ENCODE measurements at regions of chr4 and their contacts with region 1.

Region 1: GRCh38 chr4:139656614-139657486 is 8.8 kb upstream of the MGST2 start:
- DNase-seq: peak; percentile 56 to 79
- ATAC-seq: peak; percentile 92
- H3K4me3 ChIP-seq: no peak overlapping the region
- H3K27ac ChIP-seq: peak overlapping the region; percentile 60 to 63
- H3K4me1 ChIP-seq: peaks cover 32% of the 10 kb centered on the region
- CTCF ChIP-seq: peak; percentile 54; the same call in 2 of the 3 replicates
- EP300 ChIP-seq: no peak
- POLR2A ChIP-seq: no peak
- RAD21 ChIP-seq: peak; percentile 31 to 58; a peak in 3 of 5 replicates

Region 2: DNA sequence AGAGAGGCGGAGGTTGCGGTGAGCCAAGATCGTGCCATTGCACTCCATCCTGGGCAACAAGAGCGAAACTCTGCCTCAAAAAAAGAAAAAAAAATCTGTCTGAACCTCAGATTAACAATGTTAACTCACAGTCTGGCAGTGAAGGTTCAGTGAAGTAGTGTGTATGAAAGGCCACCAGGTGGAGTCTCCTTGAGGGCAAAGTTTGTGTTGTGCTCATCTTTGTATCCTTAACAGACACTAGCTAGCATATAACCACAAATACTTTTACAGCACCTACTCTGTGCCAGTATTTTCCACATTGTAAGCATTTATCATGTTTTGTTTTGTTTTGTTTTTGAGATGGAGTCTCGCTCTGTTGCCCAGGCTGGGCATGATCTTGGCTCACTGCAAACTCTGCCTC is 37.2 kb before region 1 on chr4:
- CTCF ChIA-PET with region 1: interaction called, 23 read pairs
- POLR2A ChIA-PET with region 1: no interaction called
- DNase-seq: peak in 1 of 2 experiments; percentile 55
- ATAC-seq: peak; percentile 62 to 92; a peak in 4 of 6 replicates
- H3K4me3 ChIP-seq: no peak overlapping the region
- H3K27ac ChIP-seq: no peak overlapping the region
- H3K4me1 ChIP-seq: no peaks in the 10 kb centered on the region
- CTCF ChIP-seq: peak; percentile 39
- EP300 ChIP-seq: no peak
- POLR2A ChIP-seq: no peak
- RAD21 ChIP-seq: peak; percentile 32 to 50

Region 3: GRCh38 chr4:139641218-139641617 is 15.6 kb before region 1 on chr4:
- CTCF ChIA-PET with region 1: interaction called, 39 read pairs
- POLR2A ChIA-PET with region 1: no interaction called
- DNase-seq: peak; percentile 47 to 83
- ATAC-seq: peak; percentile 91 to 96
- H3K4me3 ChIP-seq: no peak overlapping the region
- H3K27ac ChIP-seq: peak overlapping the region; percentile 82 to 87
- H3K4me1 ChIP-seq: peaks cover 62% of the 10 kb centered on the region
- CTCF ChIP-seq: no peak
- EP300 ChIP-seq: peak; percentile 62 to 63; a peak in 2 of 5 replicates
- POLR2A ChIP-seq: no peak
- RAD21 ChIP-seq: no peak

Region 4: DNA sequence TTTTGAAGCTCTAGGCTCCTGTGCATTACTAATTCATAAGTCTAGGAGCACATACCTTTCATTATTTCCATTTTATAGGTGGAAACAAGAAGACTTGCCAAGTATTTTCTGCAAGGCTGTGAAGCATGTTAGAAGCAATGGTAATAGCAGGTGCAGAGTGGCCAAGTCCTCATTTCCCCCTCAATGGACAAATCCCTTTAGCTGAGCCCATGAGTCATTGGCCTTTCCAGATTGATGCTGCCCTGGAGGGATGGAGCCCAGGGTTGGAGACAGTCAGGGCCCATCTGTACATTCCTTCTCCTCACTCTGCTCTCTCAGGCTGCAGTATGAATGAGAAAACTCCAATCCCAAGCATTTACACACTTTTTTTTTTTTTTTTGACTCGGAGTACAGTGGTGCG is 15.4 kb after region 1 on chr4:
- CTCF ChIA-PET with region 1: interaction called, 26 read pairs
- POLR2A ChIA-PET with region 1: no interaction called
- DNase-seq: no peak
- ATAC-seq: no peak
- H3K4me3 ChIP-seq: no peak overlapping the region
- H3K27ac ChIP-seq: no peak overlapping the region
- H3K4me1 ChIP-seq: peaks cover under 1% of the 10 kb centered on the region; the same call in 2 of the 3 replicates
- CTCF ChIP-seq: no peak
- EP300 ChIP-seq: no peak
- POLR2A ChIP-seq: no peak
- RAD21 ChIP-seq: no peak

Region 5: DNA sequence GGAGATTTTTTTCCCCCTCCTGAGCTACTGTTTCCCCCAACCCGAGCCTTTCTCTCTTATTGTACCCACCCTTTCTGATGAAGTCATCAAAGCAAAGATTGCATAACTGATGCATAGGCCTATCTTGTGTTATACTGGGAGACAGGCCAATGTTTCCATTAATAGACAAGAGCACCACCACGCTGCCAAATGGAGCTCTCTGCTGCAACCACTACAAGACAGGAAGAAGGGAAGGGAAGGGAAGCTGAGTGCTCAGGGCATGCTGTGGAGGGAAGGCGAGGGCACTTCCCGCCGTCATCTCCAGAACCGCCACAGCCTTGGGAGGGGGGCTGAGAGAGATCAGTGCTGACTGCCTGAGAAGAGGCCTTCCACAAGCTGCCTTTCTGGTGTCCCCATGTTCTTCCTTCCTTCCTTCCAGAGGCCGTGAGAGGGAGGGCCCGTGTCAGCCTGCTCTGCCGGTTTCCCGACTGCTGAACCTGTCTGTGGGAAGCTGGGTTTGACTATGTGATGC is 83.7 kb after region 1 on chr4:
- CTCF ChIA-PET with region 1: interaction called, 24 read pairs
- POLR2A ChIA-PET with region 1: no interaction called
- DNase-seq: peak; percentile 6 to 68
- ATAC-seq: peak; percentile 90 to 91
- H3K4me3 ChIP-seq: no peak overlapping the region
- H3K27ac ChIP-seq: peak overlapping the region; percentile 17 to 66; a peak in 4 of 6 replicates
- H3K4me1 ChIP-seq: peaks cover 35% of the 10 kb centered on the region
- CTCF ChIP-seq: 0 out of 3 replicates have a peak, but pooled peaks have one; percentile 18
- EP300 ChIP-seq: no peak
- POLR2A ChIP-seq: no peak
- RAD21 ChIP-seq: peak in 1 of 2 experiments; percentile 24; a peak in 1 of 5 replicates

Region 6: GRCh38 chr4:140252742-140253555 is 596.1 kb after region 1 on chr4:
- CTCF ChIA-PET with region 1: interaction called, 12 read pairs
- POLR2A ChIA-PET with region 1: no interaction called
- DNase-seq: peak; percentile 63 to 77
- ATAC-seq: peak; percentile 78 to 86
- H3K4me3 ChIP-seq: peak overlapping the region; percentile 44
- H3K27ac ChIP-seq: peak overlapping the region; percentile 94 to 98
- H3K4me1 ChIP-seq: peaks cover 72% of the 10 kb centered on the region
- CTCF ChIP-seq: peak; percentile 85
- EP300 ChIP-seq: no peak
- POLR2A ChIP-seq: no peak
- RAD21 ChIP-seq: peak; percentile 78 to 96

Region 7: DNA sequence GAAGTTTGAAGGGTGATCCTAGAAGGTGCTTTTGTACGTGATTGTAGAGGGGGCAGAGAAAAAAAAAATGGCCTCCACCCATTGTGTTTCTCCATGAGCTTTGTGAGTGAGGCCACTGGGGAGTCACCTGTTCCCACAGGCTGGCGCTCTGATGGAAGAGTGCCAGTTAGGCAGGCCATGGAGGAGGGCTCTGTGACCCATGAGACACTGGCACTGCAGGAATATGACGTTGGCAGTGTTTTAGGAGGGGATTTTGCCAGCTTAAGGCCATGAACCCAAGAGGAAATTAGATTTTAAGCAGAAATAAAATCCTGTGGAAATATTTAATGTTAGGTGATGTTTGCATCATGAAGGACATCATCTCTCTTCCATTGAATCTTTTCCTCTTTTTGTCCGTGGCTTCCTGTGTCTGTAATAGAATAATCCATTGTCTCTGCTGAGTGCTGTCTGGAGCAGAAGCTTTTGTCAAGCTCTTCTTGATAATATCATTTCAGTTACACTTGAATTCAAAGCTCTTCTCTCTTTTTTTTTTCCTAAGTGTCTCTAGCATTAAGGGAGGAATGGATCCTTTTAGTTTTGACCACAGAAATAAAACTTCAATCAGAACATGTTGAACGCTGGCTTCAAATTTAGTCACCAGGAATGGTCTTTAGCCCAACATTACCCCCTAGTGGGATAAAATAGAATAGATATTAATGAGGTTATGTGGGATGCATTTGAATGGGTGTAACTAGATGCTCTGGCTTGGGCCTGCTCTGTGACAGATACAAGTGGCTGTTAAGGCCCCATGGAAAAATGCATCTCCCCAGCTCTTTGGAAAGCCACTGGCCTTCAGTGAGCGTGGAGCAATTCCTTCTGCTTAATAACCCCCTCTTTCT is 952.9 kb after region 1 on chr4:
- CTCF ChIA-PET with region 1: interaction called, 10 read pairs
- POLR2A ChIA-PET with region 1: no interaction called
- DNase-seq: peak; percentile 42 to 55
- ATAC-seq: peak; percentile 88 to 89; a peak in 5 of 6 replicates
- H3K4me3 ChIP-seq: no peak overlapping the region
- H3K27ac ChIP-seq: no peak overlapping the region
- H3K4me1 ChIP-seq: no peaks in the 10 kb centered on the region
- CTCF ChIP-seq: peak; percentile 60
- EP300 ChIP-seq: no peak
- POLR2A ChIP-seq: no peak
- RAD21 ChIP-seq: peak; percentile 65 to 74